ENCODE measurements at regions of chr5 and their contacts with region 1.

Region 1: GRCh38 chr5:139968547-139969261 is 74.4 kb downstream of the NRG2 start:
- DNase-seq: peak; percentile 94
- ATAC-seq: peak; percentile 100
- H3K4me3 Mint-ChIP-seq: no peak overlapping the region
- H3K27ac Mint-ChIP-seq: no peak overlapping the region
- H3K4me1 Mint-ChIP-seq: no peaks in the 10 kb centered on the region
- H3K27me3 Mint-ChIP-seq: peaks cover 13% of the 10 kb centered on the region
- CTCF ChIP-seq: peak; percentile 99

Region 2: DNA sequence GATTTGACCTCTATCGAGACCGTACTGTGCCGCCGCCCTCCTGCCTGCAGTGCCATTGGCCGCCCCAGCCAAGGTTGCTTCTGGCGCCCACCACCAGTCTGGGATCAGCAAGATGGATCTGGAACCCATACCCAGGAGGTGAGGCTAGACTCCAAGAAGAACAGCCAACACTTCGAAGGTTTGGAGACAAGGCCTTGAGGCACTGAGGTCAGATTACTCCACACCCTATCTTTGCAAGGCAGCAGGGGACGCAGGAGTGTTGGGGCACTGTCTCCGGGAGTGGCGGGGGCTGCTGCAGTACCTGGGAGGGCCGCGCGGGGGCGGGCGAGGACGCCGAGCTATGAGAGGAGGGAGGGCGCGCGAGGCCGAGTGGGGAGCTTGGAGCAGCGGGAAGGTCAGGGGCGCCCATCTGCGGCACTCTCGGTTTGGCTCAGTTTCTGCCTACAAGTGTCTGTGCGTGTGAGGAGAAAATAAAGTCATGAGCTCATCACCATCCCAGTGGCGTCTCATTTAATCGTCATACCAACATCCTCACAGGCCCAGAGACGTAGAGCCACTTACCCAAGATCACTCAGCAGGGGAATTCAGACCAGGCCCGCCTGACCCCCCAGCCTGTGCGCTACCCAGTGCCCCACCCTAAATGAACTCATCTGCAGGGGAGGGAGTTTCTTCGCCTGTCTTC is 193.6 kb before region 1 on chr5:
- CTCF ChIA-PET with region 1: interaction called, 55 read pairs
- POLR2A ChIA-PET with region 1: no interaction called
- intact Hi-C with region 1: no loop called
- DNase-seq: peak; percentile 93
- ATAC-seq: peak; percentile 100
- H3K4me3 Mint-ChIP-seq: peak overlapping the region; percentile 14
- H3K27ac Mint-ChIP-seq: peak overlapping the region; percentile 29
- H3K4me1 Mint-ChIP-seq: peaks cover 5% of the 10 kb centered on the region
- H3K27me3 Mint-ChIP-seq: peaks cover 6% of the 10 kb centered on the region
- CTCF ChIP-seq: peak; percentile 94

Region 3: DNA sequence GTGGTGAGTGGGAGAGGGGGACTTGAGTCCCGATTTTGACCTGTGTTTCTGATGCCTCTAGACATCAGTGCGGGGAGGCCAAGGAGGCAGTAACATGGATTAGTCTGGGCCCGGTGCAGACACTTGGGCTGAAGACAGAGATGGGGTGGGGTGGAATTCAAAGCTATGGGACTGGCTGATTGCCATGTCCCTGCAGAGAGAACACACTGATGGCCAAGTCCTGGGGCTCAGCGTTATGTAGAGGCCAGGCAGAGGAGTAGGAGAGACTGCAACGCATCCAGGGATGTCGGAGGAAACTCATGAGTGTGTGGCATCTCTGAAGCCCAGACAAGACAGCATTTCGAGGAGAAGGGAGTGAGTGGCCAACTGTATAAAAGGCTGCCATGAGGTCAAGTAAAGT is 143.0 kb before region 1 on chr5:
- CTCF ChIA-PET with region 1: interaction called, 13 read pairs
- POLR2A ChIA-PET with region 1: no interaction called
- intact Hi-C with region 1: no loop called
- DNase-seq: no peak
- ATAC-seq: no peak
- H3K4me3 Mint-ChIP-seq: no peak overlapping the region
- H3K27ac Mint-ChIP-seq: no peak overlapping the region
- H3K4me1 Mint-ChIP-seq: no peaks in the 10 kb centered on the region
- H3K27me3 Mint-ChIP-seq: peaks cover 2% of the 10 kb centered on the region
- CTCF ChIP-seq: no peak

Region 4: DNA sequence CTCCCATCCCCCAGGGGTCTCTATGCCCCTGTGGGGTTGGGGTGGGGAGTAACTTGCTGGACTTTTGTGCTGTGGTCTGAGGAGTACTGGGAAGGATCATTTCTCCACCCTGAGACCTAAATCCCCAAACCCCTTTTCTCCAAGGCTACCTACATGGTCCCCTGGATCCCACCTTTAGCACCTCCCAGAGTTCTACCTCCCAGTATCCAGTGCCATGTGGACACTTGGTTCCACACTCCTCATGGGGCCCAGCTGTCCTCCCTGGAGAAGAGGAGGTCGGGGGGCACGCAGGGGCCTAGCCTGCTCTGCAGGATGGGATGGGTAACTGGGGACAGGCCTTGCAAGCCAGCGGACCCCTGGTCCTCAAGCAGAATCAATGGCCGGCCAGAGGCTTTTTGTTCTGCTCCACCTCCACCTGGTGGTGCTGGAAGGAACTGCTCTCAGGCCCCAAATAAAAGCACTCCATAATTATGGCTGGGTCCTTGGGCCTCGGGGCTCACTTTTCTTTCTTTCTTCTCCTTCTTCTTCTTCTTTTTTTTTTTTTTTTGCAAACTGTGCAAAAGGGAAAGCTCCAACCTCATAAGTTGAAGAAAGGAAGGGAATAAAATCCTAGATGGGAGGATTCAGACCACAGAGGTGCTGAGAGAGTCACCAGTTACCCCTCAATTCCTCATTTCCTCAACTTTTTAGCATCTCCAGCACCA is 104.7 kb before region 1 on chr5:
- CTCF ChIA-PET with region 1: interaction called, 46 read pairs
- POLR2A ChIA-PET with region 1: no interaction called
- intact Hi-C with region 1: no loop called
- DNase-seq: peak; percentile 79
- ATAC-seq: peak; percentile 88
- H3K4me3 Mint-ChIP-seq: no peak overlapping the region
- H3K27ac Mint-ChIP-seq: no peak overlapping the region
- H3K4me1 Mint-ChIP-seq: no peaks in the 10 kb centered on the region
- H3K27me3 Mint-ChIP-seq: peaks cover 9% of the 10 kb centered on the region
- CTCF ChIP-seq: peak; percentile 75

Region 5: DNA sequence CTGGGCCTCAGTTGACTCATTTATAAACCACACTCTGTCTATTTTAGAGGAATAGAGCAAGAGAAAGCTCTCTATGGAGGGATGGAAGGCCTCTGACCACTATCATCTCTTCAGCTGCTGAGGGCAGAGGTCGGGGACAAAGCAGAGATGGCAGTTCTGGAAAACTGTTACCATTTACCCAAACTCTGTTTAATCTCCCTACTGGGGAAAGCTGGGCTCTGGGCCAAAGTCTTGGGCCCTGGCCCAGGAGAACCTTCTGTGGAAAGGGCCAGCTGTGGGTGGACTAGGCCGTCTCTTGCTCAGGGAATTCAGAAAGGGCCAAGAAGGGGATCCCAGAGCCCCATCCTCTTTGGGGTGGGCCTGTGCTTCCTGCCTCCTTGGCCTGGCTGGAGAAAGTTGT is 73.1 kb before region 1 on chr5:
- CTCF ChIA-PET with region 1: interaction called, 24 read pairs
- POLR2A ChIA-PET with region 1: no interaction called
- intact Hi-C with region 1: no loop called
- DNase-seq: no peak
- ATAC-seq: no peak
- H3K4me3 Mint-ChIP-seq: no peak overlapping the region
- H3K27ac Mint-ChIP-seq: no peak overlapping the region
- H3K4me1 Mint-ChIP-seq: no peaks in the 10 kb centered on the region
- H3K27me3 Mint-ChIP-seq: peaks cover 4% of the 10 kb centered on the region
- CTCF ChIP-seq: no peak

Region 6: DNA sequence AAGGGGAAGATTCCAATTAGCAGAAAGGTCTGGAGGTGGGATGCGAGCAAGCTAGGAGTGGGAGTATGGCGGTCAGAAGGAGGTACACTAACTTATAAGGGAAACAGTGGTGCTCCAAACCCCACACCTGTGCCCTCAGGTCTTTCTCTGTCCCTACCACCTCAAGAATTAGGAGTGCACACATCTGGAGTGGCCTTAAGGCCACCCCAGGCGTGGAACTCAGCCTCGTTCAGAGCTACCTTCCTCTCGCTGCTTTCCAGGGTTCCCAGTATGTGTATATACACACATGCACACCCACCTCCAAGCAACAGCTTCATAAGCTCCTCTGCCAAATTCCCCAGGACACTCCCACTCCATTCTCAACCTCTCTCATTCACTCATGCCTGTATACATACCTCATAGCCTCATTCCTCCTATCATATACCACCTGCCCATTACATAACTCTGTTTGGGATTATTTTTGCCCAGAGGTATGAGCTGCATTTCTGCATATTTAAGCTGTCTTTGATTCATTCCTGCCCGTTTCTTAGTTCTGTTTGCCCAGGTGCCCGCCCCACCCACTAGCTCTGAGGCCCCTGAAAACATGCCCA is 54.4 kb before region 1 on chr5:
- CTCF ChIA-PET with region 1: interaction called, 16 read pairs
- POLR2A ChIA-PET with region 1: no interaction called
- intact Hi-C with region 1: no loop called
- DNase-seq: no peak
- ATAC-seq: no peak
- H3K4me3 Mint-ChIP-seq: no peak overlapping the region
- H3K27ac Mint-ChIP-seq: no peak overlapping the region
- H3K4me1 Mint-ChIP-seq: no peaks in the 10 kb centered on the region
- H3K27me3 Mint-ChIP-seq: peaks cover 12% of the 10 kb centered on the region
- CTCF ChIP-seq: no peak

Region 7: GRCh38 chr5:140000332-140000731 is 31.6 kb after region 1 on chr5:
- CTCF ChIA-PET with region 1: interaction called, 18 read pairs
- POLR2A ChIA-PET with region 1: no interaction called
- intact Hi-C with region 1: no loop called
- DNase-seq: no peak
- ATAC-seq: no peak
- H3K4me3 Mint-ChIP-seq: no peak overlapping the region
- H3K27ac Mint-ChIP-seq: no peak overlapping the region
- H3K4me1 Mint-ChIP-seq: no peaks in the 10 kb centered on the region
- H3K27me3 Mint-ChIP-seq: peaks cover 29% of the 10 kb centered on the region
- CTCF ChIP-seq: no peak

Region 8: GRCh38 chr5:140595538-140596300 is 627.0 kb after region 1 on chr5:
- CTCF ChIA-PET with region 1: no interaction called
- POLR2A ChIA-PET with region 1: no interaction called
- intact Hi-C with region 1: no loop called
- DNase-seq: no peak
- ATAC-seq: no peak
- H3K4me3 Mint-ChIP-seq: no peak overlapping the region
- H3K27ac Mint-ChIP-seq: no peak overlapping the region
- H3K4me1 Mint-ChIP-seq: peaks cover 4% of the 10 kb centered on the region
- H3K27me3 Mint-ChIP-seq: peaks cover 2% of the 10 kb centered on the region
- CTCF ChIP-seq: no peak

Measured in activated CD8-positive, alpha-beta T cell treated with anti-CD3 and anti-CD28 coated beads for 36 hours (primary cell).